HCT116 (cell line): ENCODE measurements at regions of chr7 and their contacts with region 1.

Region 1: GRCh38 chr7:117312598-117313580 is 10.0 kb downstream of the WNT2 start:
- DNase-seq: no peak
- ATAC-seq: no peak
- H3K4me3 ChIP-seq: no peak overlapping the region
- H3K27ac ChIP-seq: no peak overlapping the region
- H3K4me1 ChIP-seq: no peaks in the 10 kb centered on the region
- H3K27me3 ChIP-seq: no peaks in the 10 kb centered on the region
- CTCF ChIP-seq: peak; percentile 36 to 56 (median 52); a peak in 5 of 6 replicates
- POLR2A ChIP-seq: no peak
- RAD21 ChIP-seq: peak; percentile 58

Region 2: GRCh38 chr7:117157241-117158209 is 155.4 kb before region 1 on chr7:
- CTCF ChIA-PET with region 1: no interaction called
- POLR2A ChIA-PET with region 1: no interaction called
- RAD21 ChIA-PET with region 1: no interaction called
- intact Hi-C with region 1: no loop called
- DNase-seq: no peak
- ATAC-seq: peak; percentile 83
- H3K4me3 ChIP-seq: no peak overlapping the region
- H3K27ac ChIP-seq: no peak overlapping the region
- H3K4me1 ChIP-seq: peaks cover 0 to 10% of the 10 kb centered on the region in 2 experiments; a peak in 1 of 4 replicates
- H3K27me3 ChIP-seq: no peaks in the 10 kb centered on the region
- CTCF ChIP-seq: peak in 2 of 3 experiments; percentile 32 to 37; a peak in 3 of 6 replicates
- POLR2A ChIP-seq: no peak
- RAD21 ChIP-seq: no peak

Region 3: GRCh38 chr7:117715784-117716445 is 403.0 kb after region 1 on chr7:
- CTCF ChIA-PET with region 1: interaction called, 4 read pairs
- POLR2A ChIA-PET with region 1: no interaction called
- RAD21 ChIA-PET with region 1: no interaction called
- intact Hi-C with region 1: loop called (anchors 10 kb)
- DNase-seq: peak; percentile 26
- ATAC-seq: peak; percentile 85
- H3K4me3 ChIP-seq: no peak overlapping the region
- H3K27ac ChIP-seq: no peak overlapping the region
- H3K4me1 ChIP-seq: no peaks in the 10 kb centered on the region
- H3K27me3 ChIP-seq: no peaks in the 10 kb centered on the region
- CTCF ChIP-seq: peak; percentile 62 to 69 (median 64); a peak in 5 of 6 replicates
- POLR2A ChIP-seq: no peak
- RAD21 ChIP-seq: peak; percentile 75

Region 4: GRCh38 chr7:118153551-118154177 is 840.8 kb after region 1 on chr7:
- CTCF ChIA-PET with region 1: no interaction called
- POLR2A ChIA-PET with region 1: no interaction called
- RAD21 ChIA-PET with region 1: no interaction called
- intact Hi-C with region 1: loop called (anchors 5 kb)
- DNase-seq: peak; percentile 28
- ATAC-seq: peak; percentile 54; the same call in 1 of the 2 replicates
- H3K4me3 ChIP-seq: no peak overlapping the region
- H3K27ac ChIP-seq: no peak overlapping the region
- H3K4me1 ChIP-seq: no peaks in the 10 kb centered on the region
- H3K27me3 ChIP-seq: no peaks in the 10 kb centered on the region
- CTCF ChIP-seq: peak; percentile 47 to 83 (median 61); a peak in 5 of 6 replicates
- POLR2A ChIP-seq: no peak
- RAD21 ChIP-seq: peak; percentile 74